Posterior vena cava (tissue), 2 donors: ENCODE measurements at regions of chr6 and their contacts with region 1.

Region 1: DNA sequence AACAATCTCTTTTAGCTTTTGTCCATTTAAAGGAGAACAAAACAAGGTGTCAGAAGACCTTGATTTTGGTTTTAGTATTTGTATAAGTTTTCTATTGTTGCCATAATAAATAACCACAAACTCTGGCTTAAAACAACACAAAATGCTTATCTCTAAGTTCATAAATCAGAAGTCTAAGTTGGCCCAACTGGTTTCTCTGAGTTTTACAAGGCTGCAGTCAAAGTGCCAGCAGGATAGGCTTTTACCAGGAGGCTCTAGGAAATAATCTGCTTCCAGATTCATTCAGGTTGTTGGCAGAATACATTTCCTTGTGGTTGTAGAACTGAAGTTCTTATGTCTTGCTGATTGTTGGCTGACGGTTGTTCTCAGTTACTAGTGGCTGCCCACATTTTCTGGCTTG is 147.2 kb upstream of the HMGCLL1 start:
- DNase-seq: no peak

Region 2: DNA sequence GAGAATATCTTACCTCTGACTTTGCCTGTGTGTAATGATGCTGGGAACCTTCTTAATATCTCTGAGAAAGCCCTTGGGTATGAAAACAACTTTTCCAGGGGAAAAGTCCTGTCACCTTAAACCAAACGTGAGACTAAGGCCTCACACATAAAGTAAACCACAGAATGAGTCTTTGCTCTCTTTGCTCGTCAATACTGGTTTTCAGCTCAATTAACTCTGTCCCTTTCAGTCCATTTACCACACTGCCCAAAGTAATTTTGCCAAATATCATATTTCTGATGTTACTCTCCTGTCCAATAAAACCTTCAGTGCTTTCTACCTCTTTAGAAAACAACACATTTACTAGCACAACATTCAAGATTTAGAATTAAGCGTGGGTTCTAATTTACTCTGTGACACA is 46.6 kb before region 1 on chr6:
- intact Hi-C with region 1: loop called in 1 of 2 experiments (anchors 1 kb)
- DNase-seq: no peak